Transverse colon (tissue), 4 donors: ENCODE measurements at regions of chr17 and their contacts with region 1.

Region 1: GRCh38 chr17:28726226-28727130 is at the start of gene TLCD1:
- DNase-seq: peak; percentile 96
- H3K4me3 ChIP-seq: peak within 1 kb of the TSS; percentile 60 to 77 (median 64)
- H3K27ac ChIP-seq: peak within 1 kb of the TSS; percentile 97 to 98 (median 97)
- H3K4me1 ChIP-seq: peaks cover 25 to 69% (median 54%) of the 10 kb centered on the region in 4 donors
- H3K27me3 ChIP-seq: no peaks in the 10 kb centered on the region
- CTCF ChIP-seq: peak; percentile 99 to 100 (median 100)
- EP300 ChIP-seq: no peak
- POLR2A ChIP-seq: no peak
- total RNA-seq, gene TLCD1: 5.6 to 11.5 TPM in 2 of 4 donors, not detected in the others

Region 2: GRCh38 chr17:28675980-28676379 is 50.5 kb before region 1 on chr17:
- in situ Hi-C with region 1: no loop called
- intact Hi-C with region 1: no loop called
- DNase-seq: peak; percentile 27
- H3K4me3 ChIP-seq: no peak overlapping the region
- H3K27ac ChIP-seq: no peak overlapping the region
- H3K4me1 ChIP-seq: no peaks in the 10 kb centered on the region
- H3K27me3 ChIP-seq: no peaks in the 10 kb centered on the region
- CTCF ChIP-seq: peak in 4 of 5 experiments; percentile 34 to 54 (median 40)
- EP300 ChIP-seq: no peak
- POLR2A ChIP-seq: no peak

Region 3: GRCh38 chr17:28698253-28698941 is 28.1 kb before region 1 on chr17:
- in situ Hi-C with region 1: no loop called
- intact Hi-C with region 1: loop called (anchors 1 kb)
- DNase-seq: peak; percentile 87
- H3K4me3 ChIP-seq: no peak overlapping the region
- H3K27ac ChIP-seq: peak overlapping the region; percentile 71 to 80 (median 78)
- H3K4me1 ChIP-seq: peaks cover 8 to 20% (median 13%) of the 10 kb centered on the region in 4 donors
- H3K27me3 ChIP-seq: no peaks in the 10 kb centered on the region
- CTCF ChIP-seq: peak in 1 of 5 experiments; percentile 11
- EP300 ChIP-seq: peak; percentile 16
- POLR2A ChIP-seq: peak; percentile 92

Region 4: GRCh38 chr17:28854457-28855350 is 128.2 kb after region 1 on chr17 and contains the start of gene ERAL1:
- in situ Hi-C with region 1: no loop called
- intact Hi-C with region 1: no loop called
- DNase-seq: peak; percentile 87
- H3K4me3 ChIP-seq: peak within 1 kb of the TSS; percentile 54 to 81 (median 65)
- H3K27ac ChIP-seq: peak within 1 kb of the TSS; percentile 76 to 85 (median 81)
- H3K4me1 ChIP-seq: peaks cover 6 to 13% (median 11%) of the 10 kb centered on the region in 4 donors
- H3K27me3 ChIP-seq: no peaks in the 10 kb centered on the region
- CTCF ChIP-seq: no peak
- EP300 ChIP-seq: no peak
- POLR2A ChIP-seq: peak; percentile 73
- total RNA-seq, gene ERAL1: 28.1 to 74.4 (median 47.3) TPM

Region 5: GRCh38 chr17:28951991-28952975 is 225.8 kb after region 1 on chr17:
- in situ Hi-C with region 1: no loop called
- intact Hi-C with region 1: loop called (anchors 10 kb)
- DNase-seq: peak; percentile 98
- H3K4me3 ChIP-seq: peak overlapping the region; percentile 52 to 99 (median 70)
- H3K27ac ChIP-seq: peak overlapping the region; percentile 98 to 99 (median 98)
- H3K4me1 ChIP-seq: peaks cover 11 to 25% (median 21%) of the 10 kb centered on the region in 4 donors
- H3K27me3 ChIP-seq: no peaks in the 10 kb centered on the region
- CTCF ChIP-seq: peak in 1 of 5 experiments; percentile 17
- EP300 ChIP-seq: no peak
- POLR2A ChIP-seq: peak; percentile 80

Region 6: DNA sequence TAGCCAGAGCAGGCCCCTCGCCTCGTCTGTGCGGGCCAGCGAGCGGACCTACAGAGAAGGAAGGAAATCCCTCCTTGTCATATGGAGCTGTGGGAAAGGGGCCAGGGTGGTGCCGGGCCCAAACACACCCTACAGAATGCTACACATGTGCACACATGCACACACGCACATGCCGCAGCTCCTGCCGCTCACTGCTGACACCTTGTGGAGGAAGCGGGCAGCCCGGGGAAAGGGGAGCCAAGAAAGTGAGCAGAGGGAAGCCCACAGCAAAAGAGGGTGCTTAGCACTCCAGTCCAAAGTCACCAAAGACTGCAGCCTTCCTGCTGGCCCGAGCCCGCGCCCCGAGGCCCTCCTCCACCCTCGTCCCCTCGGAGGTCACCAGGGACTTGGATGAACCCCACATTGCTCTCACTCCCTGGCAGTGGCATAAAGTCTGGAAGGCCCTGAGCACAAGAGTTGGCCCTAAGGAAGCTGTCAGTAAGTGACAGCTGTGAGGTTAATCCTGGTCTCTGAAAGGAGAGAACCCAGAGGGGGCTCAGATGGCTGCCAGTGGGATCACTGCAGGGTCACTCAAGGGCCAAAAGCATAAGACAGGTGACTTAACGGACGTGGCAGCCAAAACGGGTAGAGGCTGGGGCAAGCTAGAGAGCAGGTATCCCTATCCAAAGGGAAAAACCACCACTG is 385.5 kb after region 1 on chr17:
- in situ Hi-C with region 1: no loop called
- intact Hi-C with region 1: loop called (anchors 10 kb)
- DNase-seq: peak; percentile 68
- H3K4me3 ChIP-seq: no peak overlapping the region
- H3K27ac ChIP-seq: no peak overlapping the region
- H3K4me1 ChIP-seq: no peaks in the 10 kb centered on the region
- H3K27me3 ChIP-seq: no peaks in the 10 kb centered on the region
- CTCF ChIP-seq: peak; percentile 70 to 89 (median 79)
- EP300 ChIP-seq: no peak
- POLR2A ChIP-seq: no peak